ENCODE measurements at regions of chr6 and their contacts with region 1.

Region 1: DNA sequence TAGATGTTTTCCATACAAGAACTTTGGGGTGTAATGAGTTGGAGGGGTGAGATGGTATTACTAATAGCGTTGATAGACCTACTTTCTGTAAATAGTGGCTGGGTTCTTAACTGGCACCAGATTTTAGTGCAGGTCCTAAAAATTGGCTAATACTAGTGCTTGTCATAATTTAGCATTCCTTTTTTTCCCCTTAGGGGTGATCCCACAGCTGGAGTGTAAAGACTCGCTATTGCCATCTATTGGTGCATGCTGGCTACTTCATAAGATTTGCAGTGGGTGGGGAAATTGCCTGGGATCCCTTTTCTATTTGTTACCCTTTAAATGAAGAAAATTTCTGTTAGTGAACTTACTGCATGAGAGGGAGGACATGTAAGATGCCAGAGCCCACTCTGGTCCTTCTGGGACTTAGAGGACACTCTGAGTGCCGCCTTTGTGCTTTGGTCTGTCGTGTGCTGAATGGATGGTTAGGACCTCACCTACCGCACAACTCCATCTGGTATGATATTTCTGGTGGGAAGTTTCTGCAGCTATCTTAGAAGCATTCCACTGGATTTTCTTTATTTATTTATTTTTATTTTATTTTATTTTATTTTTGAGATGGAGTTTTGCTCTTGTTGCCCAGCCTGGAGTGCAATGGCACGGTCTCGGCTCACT is 195.5 kb downstream of the JARID2 start:
- DNase-seq: peak; percentile 50
- H3K4me3 ChIP-seq: no peak overlapping the region
- H3K27ac ChIP-seq: no peak overlapping the region
- H3K4me1 ChIP-seq: peaks cover 33% of the 10 kb centered on the region
- H3K27me3 ChIP-seq: no peaks in the 10 kb centered on the region
- CTCF ChIP-seq: peak; percentile 81 to 88

Region 2: GRCh38 chr6:14743465-14744211 is 697.7 kb before region 1 on chr6:
- CTCF ChIA-PET with region 1: no interaction called
- dilution Hi-C with region 1: no loop called
- in situ Hi-C with region 1: no loop called
- intact Hi-C with region 1: loop called (anchors 1 kb)
- DNase-seq: peak; percentile 99
- H3K4me3 ChIP-seq: no peak overlapping the region
- H3K27ac ChIP-seq: peak overlapping the region; percentile 99
- H3K4me1 ChIP-seq: peaks cover 31% of the 10 kb centered on the region
- H3K27me3 ChIP-seq: no peaks in the 10 kb centered on the region
- CTCF ChIP-seq: no peak

Region 3: GRCh38 chr6:15062516-15063252 is 378.7 kb before region 1 on chr6:
- CTCF ChIA-PET with region 1: no interaction called
- dilution Hi-C with region 1: no loop called
- in situ Hi-C with region 1: no loop called
- intact Hi-C with region 1: loop called (anchors 1 kb)
- DNase-seq: peak; percentile 100
- H3K4me3 ChIP-seq: no peak overlapping the region
- H3K27ac ChIP-seq: peak overlapping the region; percentile 77
- H3K4me1 ChIP-seq: peaks cover 39% of the 10 kb centered on the region
- H3K27me3 ChIP-seq: no peaks in the 10 kb centered on the region
- CTCF ChIP-seq: no peak

Region 4: DNA sequence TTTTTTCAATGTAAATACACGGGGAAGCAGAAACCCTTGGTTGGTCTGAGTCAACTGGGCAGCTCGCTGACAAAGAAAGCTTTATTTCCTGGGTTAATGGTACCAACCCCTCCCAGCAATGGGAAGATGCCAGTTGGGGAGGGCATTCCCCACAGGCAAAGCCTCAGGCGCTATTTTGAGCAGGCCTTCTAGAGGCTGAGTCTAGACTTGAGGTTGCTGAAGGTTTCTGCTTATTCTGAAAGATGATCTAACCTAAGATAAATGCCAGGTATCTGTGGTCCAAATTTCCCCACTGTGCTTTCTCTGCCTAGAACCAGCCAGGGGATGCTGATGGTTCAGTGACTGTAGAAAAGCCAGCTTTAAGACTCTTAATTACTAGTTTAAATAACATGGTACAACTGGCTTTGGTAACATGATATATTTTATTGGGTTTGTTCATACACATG is 368.0 kb before region 1 on chr6:
- CTCF ChIA-PET with region 1: no interaction called
- dilution Hi-C with region 1: no loop called
- in situ Hi-C with region 1: no loop called
- intact Hi-C with region 1: no loop called
- DNase-seq: peak; percentile 98
- H3K4me3 ChIP-seq: no peak overlapping the region
- H3K27ac ChIP-seq: peak overlapping the region; percentile 22
- H3K4me1 ChIP-seq: no peaks in the 10 kb centered on the region
- H3K27me3 ChIP-seq: no peaks in the 10 kb centered on the region
- CTCF ChIP-seq: no peak

Region 5: GRCh38 chr6:15132854-15133670 is 308.3 kb before region 1 on chr6:
- CTCF ChIA-PET with region 1: no interaction called
- dilution Hi-C with region 1: no loop called
- in situ Hi-C with region 1: no loop called
- intact Hi-C with region 1: loop called (anchors 5 kb)
- DNase-seq: peak; percentile 99
- H3K4me3 ChIP-seq: peak overlapping the region in 2 of 3 experiments; percentile 35 to 36
- H3K27ac ChIP-seq: peak overlapping the region; percentile 92
- H3K4me1 ChIP-seq: peaks cover 30% of the 10 kb centered on the region
- H3K27me3 ChIP-seq: no peaks in the 10 kb centered on the region
- CTCF ChIP-seq: no peak

Region 6: GRCh38 chr6:15254070-15254841 is 187.1 kb before region 1 on chr6:
- CTCF ChIA-PET with region 1: no interaction called
- dilution Hi-C with region 1: no loop called
- in situ Hi-C with region 1: loop called in 1 of 2 experiments (anchors 25 kb)
- intact Hi-C with region 1: no loop called
- DNase-seq: no peak
- H3K4me3 ChIP-seq: no peak overlapping the region
- H3K27ac ChIP-seq: no peak overlapping the region
- H3K4me1 ChIP-seq: peaks cover 11% of the 10 kb centered on the region
- H3K27me3 ChIP-seq: no peaks in the 10 kb centered on the region
- CTCF ChIP-seq: peak in 1 of 2 donors; percentile 15

Region 7: DNA sequence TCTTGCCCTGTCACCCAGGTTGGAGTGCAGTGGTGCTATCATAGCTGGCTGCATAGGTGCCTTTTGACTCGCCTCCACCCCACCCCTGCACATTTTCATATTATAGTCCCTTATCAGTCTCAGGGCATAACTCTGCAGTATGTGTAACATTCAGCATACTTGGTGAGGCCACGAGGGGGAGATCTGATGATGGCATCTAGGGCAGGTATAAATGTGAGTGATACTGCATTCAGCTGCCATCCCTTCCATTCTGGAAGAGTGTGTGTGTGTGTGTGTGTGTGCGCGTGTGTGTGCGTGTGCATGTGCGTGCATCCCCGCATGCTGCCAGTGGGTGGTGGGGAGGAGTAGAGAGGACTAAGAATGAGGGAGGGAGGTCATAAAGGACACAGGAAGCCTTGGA is 114.1 kb before region 1 on chr6:
- CTCF ChIA-PET with region 1: no interaction called
- dilution Hi-C with region 1: no loop called
- in situ Hi-C with region 1: no loop called
- intact Hi-C with region 1: loop called (anchors 5 kb)
- DNase-seq: no peak
- H3K4me3 ChIP-seq: no peak overlapping the region
- H3K27ac ChIP-seq: no peak overlapping the region
- H3K4me1 ChIP-seq: peaks cover 54% of the 10 kb centered on the region
- H3K27me3 ChIP-seq: no peaks in the 10 kb centered on the region
- CTCF ChIP-seq: peak in 1 of 2 donors; percentile 28

Region 8: DNA sequence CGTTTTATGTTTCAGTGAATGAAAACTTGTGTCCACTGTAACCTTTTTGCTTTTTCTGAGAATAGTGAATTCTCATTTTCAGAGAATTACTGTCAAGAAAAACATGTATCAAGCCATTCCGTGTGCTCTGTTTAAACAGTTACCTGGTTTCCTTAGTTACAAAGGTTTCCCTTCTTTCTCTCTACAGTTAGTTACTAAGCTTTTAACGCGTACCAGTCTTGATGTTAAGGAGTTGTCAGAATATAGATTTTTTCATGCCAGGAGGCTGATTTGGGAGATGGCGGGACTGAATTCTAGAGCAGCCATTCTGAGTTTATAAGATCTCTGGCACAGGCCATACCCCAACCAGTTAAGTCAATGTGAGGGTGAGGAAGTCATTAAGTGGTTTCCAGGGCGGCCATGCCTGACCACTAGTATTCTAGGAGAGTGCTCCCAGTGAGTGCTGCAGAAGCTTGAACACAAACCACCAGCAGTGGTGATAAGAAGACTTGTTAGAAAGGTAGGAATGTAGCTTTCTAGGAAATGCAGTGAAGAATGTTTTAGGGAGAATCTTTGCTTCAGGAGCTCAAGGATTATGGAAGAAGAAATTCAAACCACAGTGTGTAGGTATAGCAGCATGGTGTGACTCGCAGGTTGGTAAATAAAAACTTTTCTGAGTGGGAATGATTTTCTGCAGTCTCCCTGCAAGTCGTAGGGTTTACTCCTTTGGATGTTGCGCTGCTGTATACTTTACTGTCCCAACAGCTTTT is 82.6 kb before region 1 on chr6:
- CTCF ChIA-PET with region 1: no interaction called
- dilution Hi-C with region 1: loop called (anchors 5 kb)
- in situ Hi-C with region 1: no loop called
- intact Hi-C with region 1: no loop called
- DNase-seq: no peak
- H3K4me3 ChIP-seq: no peak overlapping the region
- H3K27ac ChIP-seq: no peak overlapping the region
- H3K4me1 ChIP-seq: no peaks in the 10 kb centered on the region
- H3K27me3 ChIP-seq: no peaks in the 10 kb centered on the region
- CTCF ChIP-seq: no peak

Region 9: DNA sequence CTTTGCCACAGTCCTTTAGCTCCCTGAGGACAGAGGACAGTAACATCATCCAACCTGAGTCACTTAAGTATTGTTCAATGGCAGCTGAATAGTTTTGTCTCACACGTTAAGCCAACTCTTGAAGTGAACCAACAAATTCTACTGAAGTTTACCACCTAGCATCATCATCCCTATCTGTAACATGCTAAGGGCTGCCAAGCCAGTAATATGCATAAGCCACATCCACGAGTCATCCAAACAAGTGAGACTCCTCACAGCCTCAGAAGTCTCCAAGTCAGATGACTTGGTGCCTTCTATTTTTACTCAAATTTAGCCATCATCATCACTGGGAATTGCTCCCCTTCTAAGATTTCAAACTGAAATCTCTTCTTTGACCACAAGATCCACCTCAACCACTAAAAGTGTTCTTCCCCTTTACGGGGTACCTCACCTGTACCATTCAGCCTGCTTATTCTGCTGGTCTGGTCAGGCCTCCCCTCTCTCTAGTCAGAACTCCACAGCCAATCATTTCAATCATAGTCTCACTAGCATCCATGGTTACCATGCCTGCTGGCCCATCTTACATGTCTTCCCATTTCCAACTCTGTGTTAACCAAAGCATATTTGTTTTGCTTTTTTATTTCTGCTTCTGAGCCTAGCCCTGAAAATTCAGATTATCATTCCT is 147.8 kb after region 1 on chr6:
- CTCF ChIA-PET with region 1: no interaction called
- dilution Hi-C with region 1: no loop called
- in situ Hi-C with region 1: no loop called
- intact Hi-C with region 1: no loop called
- DNase-seq: peak; percentile 73
- H3K4me3 ChIP-seq: no peak overlapping the region
- H3K27ac ChIP-seq: no peak overlapping the region
- H3K4me1 ChIP-seq: no peaks in the 10 kb centered on the region
- H3K27me3 ChIP-seq: no peaks in the 10 kb centered on the region
- CTCF ChIP-seq: no peak

Measured in mammary epithelial cell (primary cell).